ENCODE measurements at regions of chr2 and their contacts with region 1.

Region 1: GRCh38 chr2:208224802-208225201 is 30.1 kb downstream of the IDH1 start:
- DNase-seq: no peak
- H3K4me3 ChIP-seq: no peak overlapping the region
- H3K27ac ChIP-seq: no peak overlapping the region
- H3K4me1 ChIP-seq: no peaks in the 10 kb centered on the region
- H3K27me3 ChIP-seq: no peaks in the 10 kb centered on the region
- CTCF ChIP-seq: no peak
- EP300 ChIP-seq: no peak
- POLR2A ChIP-seq: no peak

Region 2: GRCh38 chr2:208240619-208241209 is 15.9 kb after region 1 on chr2:
- in situ Hi-C with region 1: no loop called
- intact Hi-C with region 1: no loop called
- DNase-seq: no peak
- H3K4me3 ChIP-seq: no peak overlapping the region
- H3K27ac ChIP-seq: peak overlapping the region in 1 of 4 donors; percentile 57
- H3K4me1 ChIP-seq: peaks cover 0 to 18% (median 2%) of the 10 kb centered on the region in 4 donors
- H3K27me3 ChIP-seq: no peaks in the 10 kb centered on the region
- CTCF ChIP-seq: no peak
- EP300 ChIP-seq: no peak
- POLR2A ChIP-seq: no peak

Region 3: DNA sequence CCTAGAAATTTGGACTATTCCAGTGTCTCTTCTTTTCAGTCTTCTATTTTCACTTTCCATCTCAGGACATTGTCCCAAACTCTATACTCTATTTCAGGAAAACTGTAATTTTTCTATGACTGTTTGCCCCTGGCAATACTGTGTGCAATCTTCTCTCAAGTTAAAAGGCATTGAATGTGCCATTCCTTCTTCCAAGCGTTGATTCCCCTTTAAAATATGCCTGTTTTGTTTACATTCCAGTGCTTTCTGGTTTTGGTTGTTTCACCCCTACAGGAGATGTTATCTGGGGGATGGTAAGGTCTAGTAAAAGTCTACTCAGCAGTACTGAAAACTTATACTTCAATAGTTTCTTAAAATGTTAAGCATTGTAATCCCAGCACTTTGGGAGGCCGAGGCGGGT is 1194.2 kb after region 1 on chr2:
- in situ Hi-C with region 1: no loop called
- intact Hi-C with region 1: loop called (anchors 5 kb)
- DNase-seq: no peak
- H3K4me3 ChIP-seq: no peak overlapping the region
- H3K27ac ChIP-seq: no peak overlapping the region
- H3K4me1 ChIP-seq: peaks cover 0 to 6% (median 2%) of the 10 kb centered on the region in 4 donors
- H3K27me3 ChIP-seq: no peaks in the 10 kb centered on the region
- CTCF ChIP-seq: no peak
- EP300 ChIP-seq: no peak
- POLR2A ChIP-seq: no peak